A549 (cell line): ENCODE measurements at regions of chr3 and their contacts with region 1.

Region 1: DNA sequence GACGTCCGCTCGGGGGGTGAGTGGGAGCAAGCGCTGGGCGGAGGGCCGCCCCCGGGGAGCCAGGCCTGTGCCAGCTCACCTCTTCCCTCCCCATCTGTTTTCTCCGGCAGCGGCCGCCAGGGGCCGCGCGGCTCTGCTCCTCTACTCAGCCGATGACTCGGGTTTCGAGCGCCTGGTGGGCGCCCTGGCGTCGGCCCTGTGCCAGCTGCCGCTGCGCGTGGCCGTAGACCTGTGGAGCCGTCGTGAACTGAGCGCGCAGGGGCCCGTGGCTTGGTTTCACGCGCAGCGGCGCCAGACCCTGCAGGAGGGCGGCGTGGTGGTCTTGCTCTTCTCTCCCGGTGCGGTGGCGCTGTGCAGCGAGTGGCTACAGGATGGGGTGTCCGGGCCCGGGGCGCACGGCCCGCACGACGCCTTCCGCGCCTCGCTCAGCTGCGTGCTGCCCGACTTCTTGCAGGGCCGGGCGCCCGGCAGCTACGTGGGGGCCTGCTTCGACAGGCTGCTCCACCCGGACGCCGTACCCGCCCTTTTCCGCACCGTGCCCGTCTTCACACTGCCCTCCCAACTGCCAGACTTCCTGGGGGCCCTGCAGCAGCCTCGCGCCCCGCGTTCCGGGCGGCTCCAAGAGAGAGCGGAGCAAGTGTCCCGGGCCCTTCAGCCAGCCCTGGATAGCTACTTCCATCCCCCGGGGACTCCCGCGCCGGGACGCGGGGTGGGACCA is 632 bp upstream of the CRELD1 start:
- DNase-seq: peak; percentile 74 to 76
- ATAC-seq: peak; percentile 77 to 89
- H3K4me3 ChIP-seq: peak overlapping the region; percentile 73
- H3K27ac ChIP-seq: peak overlapping the region; percentile 85 to 93
- H3K4me1 ChIP-seq: peaks cover 17% of the 10 kb centered on the region
- CTCF ChIP-seq: peak; percentile 78
- EP300 ChIP-seq: no peak
- POLR2A ChIP-seq: 0 out of 2 replicates have a peak, but pooled peaks have one; percentile 27
- RAD21 ChIP-seq: peak; percentile 59 to 67; a peak in 4 of 5 replicates

Region 2: DNA sequence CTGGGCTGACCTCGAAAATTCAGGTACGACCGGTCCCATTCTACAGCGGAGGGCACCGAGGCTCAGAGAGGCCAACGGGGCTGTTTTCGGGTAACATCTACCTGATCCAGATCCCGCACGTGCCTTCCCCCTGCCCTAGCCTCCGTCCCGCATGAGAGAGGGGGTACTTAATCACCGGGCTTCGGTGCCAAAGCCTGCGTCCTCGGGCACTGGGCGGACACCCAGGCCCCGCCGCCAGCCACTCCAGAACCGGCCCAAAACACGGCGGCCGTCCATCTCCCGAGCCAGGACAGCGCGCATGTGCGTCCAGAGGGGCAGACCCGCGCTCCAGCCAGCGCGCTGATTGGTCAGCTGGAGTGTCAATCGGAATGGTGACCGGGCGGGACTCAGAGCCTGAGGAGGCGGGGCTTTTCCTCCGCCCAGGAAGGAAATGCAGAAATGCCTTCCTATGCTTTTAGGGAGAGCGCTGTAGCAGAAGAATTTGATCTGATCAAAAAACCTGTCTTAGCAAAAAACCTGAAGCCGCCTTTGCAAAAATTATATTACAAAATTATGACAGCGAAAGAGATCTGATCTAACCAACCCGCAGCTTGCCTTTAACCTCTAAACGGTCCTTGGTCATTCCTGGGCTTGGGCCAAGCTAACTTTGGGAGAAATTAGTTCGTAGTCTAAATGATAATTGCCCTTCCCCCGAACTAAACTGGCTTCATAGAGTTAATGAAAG is 89.1 kb before region 1 on chr3 and contains the start of gene RPUSD3:
- CTCF ChIA-PET with region 1: interaction called, 26 read pairs
- POLR2A ChIA-PET with region 1: interaction called, 10 read pairs
- DNase-seq: peak; percentile 95 to 99
- ATAC-seq: peak; percentile 95 to 98
- H3K4me3 ChIP-seq: peak within 1 kb of the TSS; percentile 79
- H3K27ac ChIP-seq: peak within 1 kb of the TSS; percentile 85 to 89
- H3K4me1 ChIP-seq: peaks cover 11% of the 10 kb centered on the region; the same call in 2 of the 3 replicates
- CTCF ChIP-seq: no peak
- EP300 ChIP-seq: no peak
- POLR2A ChIP-seq: peak; percentile 82
- RAD21 ChIP-seq: 0 out of 5 replicates have a peak, but pooled peaks of 1 of the 2 experiments have one; percentile 14
- polyA plus RNA-seq, gene RPUSD3: 38.9 and 47.1 TPM in 2 replicates

Region 3: DNA sequence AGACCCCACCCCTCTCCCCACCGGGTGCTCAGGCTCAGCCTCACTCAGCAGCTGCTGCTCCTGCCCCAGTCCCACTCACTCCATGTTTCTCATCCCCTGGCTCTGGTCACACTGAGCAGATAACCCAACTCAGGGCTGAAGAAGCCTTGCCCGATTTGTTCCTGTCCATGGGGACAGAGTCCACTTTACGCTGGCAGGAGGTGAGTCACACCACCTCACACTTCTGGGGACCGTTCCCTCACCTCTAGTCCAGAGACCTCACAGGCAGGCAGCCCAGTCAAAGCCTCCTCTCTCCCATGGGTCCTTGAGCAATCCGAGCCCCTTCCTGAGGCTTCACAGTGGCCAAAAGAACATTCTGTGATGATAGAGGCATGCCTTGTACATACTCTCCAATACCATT is 54.3 kb before region 1 on chr3:
- CTCF ChIA-PET with region 1: interaction called, 17 read pairs
- POLR2A ChIA-PET with region 1: interaction called, 14 read pairs
- DNase-seq: peak; percentile 65 to 74
- ATAC-seq: peak; percentile 84 to 88
- H3K4me3 ChIP-seq: no peak overlapping the region; the same call in 2 of the 3 replicates
- H3K27ac ChIP-seq: peak overlapping the region; percentile 75 to 82
- H3K4me1 ChIP-seq: peaks cover 31% of the 10 kb centered on the region
- CTCF ChIP-seq: no peak
- EP300 ChIP-seq: no peak
- POLR2A ChIP-seq: no peak
- RAD21 ChIP-seq: no peak

Region 4: GRCh38 chr3:9884555-9885165 is 48.3 kb before region 1 on chr3:
- CTCF ChIA-PET with region 1: interaction called, 17 read pairs
- POLR2A ChIA-PET with region 1: interaction called, 14 read pairs
- DNase-seq: peak; percentile 93 to 96
- ATAC-seq: peak; percentile 98 to 99
- H3K4me3 ChIP-seq: no peak overlapping the region
- H3K27ac ChIP-seq: peak overlapping the region; percentile 88 to 89
- H3K4me1 ChIP-seq: peaks cover 31% of the 10 kb centered on the region
- CTCF ChIP-seq: no peak
- EP300 ChIP-seq: no peak
- POLR2A ChIP-seq: no peak
- RAD21 ChIP-seq: peak in 1 of 2 experiments; percentile 22; a peak in 1 of 5 replicates

Region 5: DNA sequence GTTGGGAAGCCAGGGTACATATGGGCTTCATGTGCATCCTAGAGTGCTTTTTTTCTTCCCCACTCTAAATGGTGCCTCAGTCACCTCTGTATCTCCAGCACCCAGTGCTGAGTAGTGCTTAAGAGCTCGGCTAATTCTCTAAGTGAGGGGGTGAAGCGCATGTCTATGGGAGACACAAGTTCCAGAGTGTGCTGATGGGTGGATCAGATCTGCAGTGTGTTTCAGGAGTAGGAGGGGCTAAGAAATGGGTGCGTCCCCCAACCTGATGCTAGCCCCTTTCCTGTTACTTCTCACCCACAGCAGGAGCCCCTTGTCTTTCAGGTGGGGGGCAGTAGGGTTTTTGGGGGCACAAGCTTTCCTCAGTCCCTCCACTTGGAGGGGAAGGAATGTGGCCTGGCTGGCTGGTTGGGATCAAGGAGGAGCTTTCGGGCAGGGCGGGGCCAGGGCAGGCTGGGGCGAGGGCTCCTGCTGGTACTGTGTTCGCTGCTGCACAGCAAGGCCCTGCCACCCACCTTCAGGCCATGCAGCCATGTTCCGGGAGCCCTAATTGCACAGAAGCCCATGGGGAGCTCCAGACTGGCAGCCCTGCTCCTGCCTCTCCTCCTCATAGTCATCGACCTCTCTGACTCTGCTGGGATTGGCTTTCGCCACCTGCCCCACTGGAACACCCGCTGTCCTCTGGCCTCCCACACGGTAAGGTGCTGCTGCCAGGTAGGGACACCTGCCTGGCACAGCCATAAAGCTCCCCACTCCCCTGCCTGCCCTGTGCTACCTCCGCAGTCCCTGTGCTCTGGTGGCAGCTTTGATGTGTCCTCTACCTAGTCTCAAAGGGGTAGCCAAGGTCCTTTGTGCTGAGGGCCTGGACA is 30.4 kb before region 1 on chr3 and contains the start of gene IL17RE:
- CTCF ChIA-PET with region 1: interaction called, 73 read pairs
- POLR2A ChIA-PET with region 1: interaction called, 6 read pairs
- DNase-seq: no peak
- ATAC-seq: peak; percentile 20 to 33; a peak in 3 of 6 replicates
- H3K4me3 ChIP-seq: no peak within 1 kb of the TSS
- H3K27ac ChIP-seq: peak within 1 kb of the TSS in 1 of 2 experiments; percentile 67; a peak in 3 of 6 replicates
- H3K4me1 ChIP-seq: peaks cover 33% of the 10 kb centered on the region
- CTCF ChIP-seq: no peak
- EP300 ChIP-seq: no peak
- POLR2A ChIP-seq: no peak
- RAD21 ChIP-seq: no peak
- polyA plus RNA-seq, gene IL17RE: 0.53 and 0.60 TPM in 2 replicates

Region 6: DNA sequence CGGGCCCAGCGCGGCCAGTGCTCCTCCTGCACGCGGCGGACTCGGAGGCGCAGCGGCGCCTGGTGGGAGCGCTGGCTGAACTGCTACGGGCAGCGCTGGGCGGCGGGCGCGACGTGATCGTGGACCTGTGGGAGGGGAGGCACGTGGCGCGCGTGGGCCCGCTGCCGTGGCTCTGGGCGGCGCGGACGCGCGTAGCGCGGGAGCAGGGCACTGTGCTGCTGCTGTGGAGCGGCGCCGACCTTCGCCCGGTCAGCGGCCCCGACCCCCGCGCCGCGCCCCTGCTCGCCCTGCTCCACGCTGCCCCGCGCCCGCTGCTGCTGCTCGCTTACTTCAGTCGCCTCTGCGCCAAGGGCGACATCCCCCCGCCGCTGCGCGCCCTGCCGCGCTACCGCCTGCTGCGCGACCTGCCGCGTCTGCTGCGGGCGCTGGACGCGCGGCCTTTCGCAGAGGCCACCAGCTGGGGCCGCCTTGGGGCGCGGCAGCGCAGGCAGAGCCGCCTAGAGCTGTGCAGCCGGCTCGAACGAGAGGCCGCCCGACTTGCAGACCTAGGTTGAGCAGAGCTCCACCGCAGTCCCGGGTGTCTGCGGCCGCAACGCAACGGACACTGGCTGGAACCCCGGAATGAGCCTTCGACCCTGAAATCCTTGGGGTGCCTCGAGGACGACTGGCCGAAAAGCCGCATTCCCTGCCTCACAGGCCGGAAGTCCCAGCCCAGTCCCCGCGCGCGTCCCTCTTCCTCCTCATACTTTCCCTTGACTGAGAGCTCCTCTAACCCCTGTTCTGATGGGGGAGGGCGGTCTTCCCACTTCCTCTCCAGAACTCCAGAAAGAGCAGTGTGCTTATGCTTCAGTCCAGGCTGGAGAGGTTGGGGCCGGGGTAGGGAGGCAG is 17.5 kb before region 1 on chr3:
- CTCF ChIA-PET with region 1: interaction called, 73 read pairs
- POLR2A ChIA-PET with region 1: interaction called, 6 read pairs
- DNase-seq: no peak
- ATAC-seq: peak; percentile 10 to 24; a peak in 4 of 6 replicates
- H3K4me3 ChIP-seq: peak overlapping the region; percentile 43
- H3K27ac ChIP-seq: peak overlapping the region; percentile 84 to 89
- H3K4me1 ChIP-seq: peaks cover 40% of the 10 kb centered on the region
- CTCF ChIP-seq: no peak
- EP300 ChIP-seq: no peak
- POLR2A ChIP-seq: no peak; the same call in none of the 2 replicates
- RAD21 ChIP-seq: no peak

Region 7: DNA sequence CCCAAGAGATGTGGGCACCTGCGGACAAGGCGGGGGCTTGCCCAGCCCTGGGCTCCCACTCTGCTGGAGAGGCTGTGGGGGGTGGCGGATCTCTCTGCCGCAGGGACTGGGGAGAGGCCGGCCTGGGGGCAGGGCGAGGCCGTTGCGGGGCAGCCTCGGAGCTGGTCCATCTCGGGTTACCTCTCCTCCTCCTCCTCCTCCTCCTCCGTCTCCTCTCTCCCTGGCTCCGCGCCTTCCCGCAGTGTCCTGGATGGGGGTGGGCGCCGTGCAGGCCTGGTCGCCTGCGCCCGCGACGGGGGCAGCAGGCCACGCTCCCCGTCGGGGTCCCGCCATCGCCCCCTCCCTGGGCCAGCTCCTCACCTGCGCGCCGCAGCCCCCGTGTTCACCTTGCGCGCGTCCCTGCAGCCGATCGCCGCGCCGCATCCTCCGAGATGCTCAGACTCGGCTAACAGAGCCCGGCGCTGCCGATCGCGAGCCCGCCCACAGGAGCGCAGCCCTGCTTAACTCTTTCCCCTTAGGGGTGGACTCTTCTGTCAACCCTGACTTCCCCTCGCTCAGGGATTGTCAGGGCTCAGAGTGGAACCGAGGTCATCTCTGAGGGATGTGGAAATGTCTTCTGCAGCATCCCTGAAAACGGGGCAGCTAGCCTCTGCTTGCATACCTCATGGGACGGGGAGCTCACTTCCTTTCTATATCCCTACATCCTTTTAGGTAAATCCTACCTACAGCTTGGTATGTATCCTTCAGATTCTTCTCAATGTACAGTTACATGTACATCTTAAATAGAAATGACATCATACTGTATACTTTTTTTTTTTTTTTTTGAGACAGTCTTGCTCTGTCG is 19.2 kb after region 1 on chr3 and contains the start of gene PRRT3:
- CTCF ChIA-PET with region 1: interaction called, 146 read pairs
- POLR2A ChIA-PET with region 1: interaction called, 53 read pairs
- DNase-seq: peak in 1 of 2 experiments; percentile 38
- ATAC-seq: peak in 1 of 2 experiments; percentile 64; a peak in 3 of 6 replicates
- H3K4me3 ChIP-seq: peak within 1 kb of the TSS; percentile 42
- H3K27ac ChIP-seq: peak within 1 kb of the TSS in 1 of 2 experiments; percentile 82; a peak in 3 of 6 replicates
- H3K4me1 ChIP-seq: peaks cover 23% of the 10 kb centered on the region
- CTCF ChIP-seq: no peak
- EP300 ChIP-seq: no peak
- POLR2A ChIP-seq: 0 out of 2 replicates have a peak, but pooled peaks have one; percentile 14
- RAD21 ChIP-seq: no peak
- polyA plus RNA-seq, gene PRRT3: 0.50 and 0.53 TPM in 2 replicates

Region 8: GRCh38 chr3:10344147-10344943 is 411.3 kb after region 1 on chr3:
- CTCF ChIA-PET with region 1: no interaction called
- POLR2A ChIA-PET with region 1: no interaction called
- DNase-seq: peak; percentile 56 to 63
- ATAC-seq: peak; percentile 22 to 76; a peak in 4 of 6 replicates
- H3K4me3 ChIP-seq: no peak overlapping the region
- H3K27ac ChIP-seq: no peak overlapping the region
- H3K4me1 ChIP-seq: no peaks in the 10 kb centered on the region
- CTCF ChIP-seq: peak; percentile 87
- EP300 ChIP-seq: no peak
- POLR2A ChIP-seq: no peak
- RAD21 ChIP-seq: peak; percentile 81